ENCODE measurements at regions of chr10 and their contacts with region 1.

Region 1: GRCh38 chr10:129614341-129614740 is 147.3 kb downstream of the MGMT start:
- DNase-seq: no peak
- ATAC-seq: no peak
- H3K4me3 ChIP-seq: no peak overlapping the region
- H3K4me3 Mint-ChIP-seq: no peak overlapping the region
- H3K27ac ChIP-seq: no peak overlapping the region
- H3K27ac Mint-ChIP-seq: no peak overlapping the region
- H3K4me1 ChIP-seq: no peaks in the 10 kb centered on the region
- H3K4me1 Mint-ChIP-seq: peaks cover 25 to 49% of the 10 kb centered on the region in 2 donors
- H3K27me3 ChIP-seq: no peaks in the 10 kb centered on the region
- H3K27me3 Mint-ChIP-seq: no peaks in the 10 kb centered on the region
- CTCF ChIP-seq: no peak

Region 2: DNA sequence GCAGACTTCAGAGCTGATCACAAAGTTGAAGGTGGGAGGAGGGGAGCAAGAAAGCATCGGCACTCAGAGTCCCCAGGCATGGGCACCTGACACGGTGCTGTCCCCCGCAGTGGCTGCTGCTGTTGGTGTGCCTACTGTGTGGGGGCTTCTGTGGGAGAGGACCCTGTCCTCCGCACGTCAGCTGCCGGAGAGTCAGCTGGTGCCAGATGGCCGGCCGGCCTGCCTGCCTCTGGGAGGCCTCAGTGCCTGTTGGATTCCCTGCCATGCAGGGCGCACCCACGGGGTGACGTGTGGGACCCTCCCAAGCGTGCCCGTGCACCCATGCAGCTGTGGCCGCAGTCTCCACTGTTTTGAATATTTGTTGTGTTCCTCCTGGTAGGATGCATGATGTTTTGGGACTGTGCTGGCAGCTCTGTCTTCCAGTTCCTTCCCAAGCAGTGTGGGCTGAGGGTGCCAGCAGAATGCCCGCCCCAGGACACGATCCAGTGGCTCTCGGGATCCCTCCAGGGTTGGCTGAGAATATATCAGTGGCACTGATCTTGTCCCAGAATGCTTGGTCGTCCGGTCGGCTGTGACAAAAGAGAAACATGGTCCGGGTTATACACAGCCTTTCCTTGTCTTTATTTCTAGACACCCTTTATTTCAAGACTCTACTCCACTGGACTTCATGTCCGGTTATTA is 38.3 kb after region 1 on chr10:
- intact Hi-C with region 1: loop called (anchors 5 kb)
- DNase-seq: no peak
- ATAC-seq: no peak
- H3K4me3 ChIP-seq: no peak overlapping the region
- H3K4me3 Mint-ChIP-seq: no peak overlapping the region
- H3K27ac ChIP-seq: no peak overlapping the region
- H3K27ac Mint-ChIP-seq: no peak overlapping the region
- H3K4me1 ChIP-seq: peaks cover 5% of the 10 kb centered on the region
- H3K4me1 Mint-ChIP-seq: peaks cover 5 to 13% of the 10 kb centered on the region in 2 donors
- H3K27me3 ChIP-seq: no peaks in the 10 kb centered on the region
- H3K27me3 Mint-ChIP-seq: no peaks in the 10 kb centered on the region
- CTCF ChIP-seq: no peak

Region 3: DNA sequence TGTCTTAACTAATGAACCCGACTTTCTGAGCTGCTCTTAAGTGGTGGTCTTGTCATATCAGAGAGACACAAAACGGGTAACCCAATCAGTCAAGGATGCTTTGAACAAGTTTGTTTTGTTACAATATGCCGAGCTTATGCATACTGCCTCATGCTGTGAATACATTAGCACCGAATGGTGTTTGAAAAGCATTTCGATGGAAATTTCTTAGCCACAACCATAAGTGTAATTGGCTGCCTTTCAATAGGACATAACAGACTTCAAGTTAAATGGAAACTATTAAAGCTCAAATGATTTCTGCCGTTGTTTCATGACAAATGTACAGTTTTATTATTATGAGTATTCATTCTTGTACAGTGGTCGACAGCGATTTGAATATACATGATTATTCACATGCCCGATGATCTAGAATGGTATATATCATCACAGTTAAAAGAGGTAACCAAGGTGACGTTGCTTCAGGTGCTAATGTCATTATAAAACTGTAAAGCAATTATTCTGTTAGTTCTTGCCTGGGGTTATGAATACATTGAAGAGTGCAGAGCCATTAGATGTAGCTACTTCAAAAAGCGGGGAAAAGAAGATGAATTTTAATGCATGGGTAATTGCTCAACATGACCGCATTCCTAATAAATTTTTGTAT is 230.9 kb after region 1 on chr10:
- intact Hi-C with region 1: no loop called
- DNase-seq: no peak
- ATAC-seq: no peak
- H3K4me3 ChIP-seq: no peak overlapping the region
- H3K4me3 Mint-ChIP-seq: no peak overlapping the region
- H3K27ac ChIP-seq: no peak overlapping the region
- H3K27ac Mint-ChIP-seq: no peak overlapping the region
- H3K4me1 ChIP-seq: no peaks in the 10 kb centered on the region
- H3K4me1 Mint-ChIP-seq: no peaks in the 10 kb centered on the region
- H3K27me3 ChIP-seq: no peaks in the 10 kb centered on the region
- H3K27me3 Mint-ChIP-seq: peaks cover 0 to 6% of the 10 kb centered on the region in 2 donors
- CTCF ChIP-seq: no peak

Measured in natural killer cell (primary cell).